ENCODE measurements at regions of chr9 and their contacts with region 1.

Region 1: GRCh38 chr9:124764774-124765438 is 6.2 kb downstream of the NR6A1 start:
- DNase-seq: peak; percentile 50 to 53
- ATAC-seq: peak; percentile 54 to 76; a peak in 4 of 6 replicates
- H3K4me3 ChIP-seq: no peak overlapping the region
- H3K27ac ChIP-seq: no peak overlapping the region
- H3K4me1 ChIP-seq: peaks cover 22% of the 10 kb centered on the region; the same call in 2 of the 3 replicates
- CTCF ChIP-seq: peak; percentile 50
- EP300 ChIP-seq: no peak
- POLR2A ChIP-seq: no peak
- RAD21 ChIP-seq: peak; percentile 53 to 61

Region 2: DNA sequence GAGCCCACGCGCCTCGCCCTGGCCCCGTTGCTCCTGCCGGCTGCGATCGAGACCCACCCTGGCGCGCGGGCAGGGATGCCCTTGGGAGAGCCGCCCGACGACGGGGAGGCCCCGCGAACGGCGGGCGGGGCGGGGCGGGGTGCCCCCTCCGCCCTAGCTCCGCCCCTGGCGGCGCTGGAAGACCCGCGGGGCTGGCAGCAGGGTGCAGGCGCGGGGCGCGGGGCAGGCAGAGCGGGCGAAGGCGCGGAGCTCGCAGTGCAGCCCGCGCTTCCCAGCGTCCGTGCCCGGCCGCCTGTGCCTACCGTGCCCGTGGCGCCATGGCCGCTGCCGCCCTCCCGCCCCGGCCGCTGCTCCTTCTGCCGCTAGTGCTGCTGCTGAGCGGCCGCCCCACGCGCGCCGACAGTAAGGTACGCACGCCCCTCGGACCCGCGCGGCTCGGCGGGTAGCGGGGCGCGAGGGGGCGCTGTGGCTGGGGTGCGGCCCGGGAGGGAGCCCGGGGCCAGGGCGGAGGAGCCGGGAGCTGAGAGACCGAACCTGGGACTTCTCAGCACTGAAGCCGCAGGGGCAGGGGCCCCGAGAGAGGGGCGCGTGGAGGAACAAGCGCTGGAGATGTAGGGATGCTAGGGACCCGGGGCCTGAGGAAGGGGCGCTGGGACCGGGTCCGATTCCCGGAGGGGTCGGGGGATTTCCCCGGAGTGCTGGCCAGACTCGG is 12.2 kb after region 1 on chr9 and contains the start of gene OLFML2A:
- CTCF ChIA-PET with region 1: interaction called, 84 read pairs
- POLR2A ChIA-PET with region 1: interaction called, 3 read pairs
- DNase-seq: peak; percentile 41 to 58
- ATAC-seq: peak; percentile 45 to 52
- H3K4me3 ChIP-seq: peak within 1 kb of the TSS; percentile 67
- H3K27ac ChIP-seq: peak within 1 kb of the TSS; percentile 81 to 88
- H3K4me1 ChIP-seq: peaks cover 54% of the 10 kb centered on the region
- CTCF ChIP-seq: peak; percentile 69
- EP300 ChIP-seq: no peak
- POLR2A ChIP-seq: peak; percentile 44
- RAD21 ChIP-seq: peak; percentile 23 to 37; a peak in 3 of 5 replicates
- polyA plus RNA-seq, gene OLFML2A: 8.2 and 11.8 TPM in 2 replicates